HAP-1 (cell line): ENCODE measurements at regions of chr19 and their contacts with region 1.

Region 1: DNA sequence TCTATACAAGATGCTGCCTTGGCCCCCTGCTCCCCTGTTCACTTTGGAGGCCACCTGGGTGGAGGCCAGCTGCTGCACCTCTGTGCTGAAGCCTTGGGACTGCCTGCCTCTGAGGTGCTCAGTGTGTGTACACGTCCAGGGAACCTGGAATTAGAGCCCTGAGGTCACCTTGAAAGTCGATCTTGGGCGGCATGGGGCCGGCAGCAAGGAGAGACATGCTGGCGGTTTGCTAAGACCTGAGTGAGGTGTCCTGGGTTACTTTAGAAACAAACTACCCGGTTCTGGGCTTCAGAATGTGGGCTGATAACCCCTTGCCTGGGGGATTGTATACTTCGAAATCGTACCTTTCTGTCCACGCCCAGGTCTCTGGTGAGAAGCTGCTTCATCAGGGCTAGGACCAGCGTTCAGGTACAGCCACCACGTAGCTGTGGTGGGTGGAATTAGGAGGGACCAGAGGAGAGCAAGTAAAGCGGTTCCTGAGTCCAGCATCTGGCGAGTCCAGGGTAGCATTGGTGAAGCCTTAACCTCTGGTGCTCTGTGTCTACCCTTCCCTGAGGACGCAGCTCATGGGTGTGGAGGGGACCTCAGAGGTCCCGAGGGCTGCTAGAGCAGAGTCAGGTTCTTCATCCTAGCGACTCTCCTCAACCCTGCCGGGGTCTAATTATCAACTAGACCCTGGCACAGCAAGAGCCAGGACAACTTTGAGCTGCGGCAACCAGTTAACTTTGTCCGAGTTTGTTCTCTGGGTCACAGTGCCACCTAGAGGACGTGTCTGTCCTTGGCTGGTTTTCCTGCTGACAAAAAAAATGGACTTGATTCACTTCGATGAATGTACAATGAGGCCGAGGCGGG is 25.3 kb downstream of the TSSK6 start:
- DNase-seq: peak; percentile 80 to 85
- H3K4me3 ChIP-seq: no peak overlapping the region
- H3K4me1 ChIP-seq: peaks cover 14% of the 10 kb centered on the region
- H3K27me3 ChIP-seq: no peaks in the 10 kb centered on the region

Region 2: DNA sequence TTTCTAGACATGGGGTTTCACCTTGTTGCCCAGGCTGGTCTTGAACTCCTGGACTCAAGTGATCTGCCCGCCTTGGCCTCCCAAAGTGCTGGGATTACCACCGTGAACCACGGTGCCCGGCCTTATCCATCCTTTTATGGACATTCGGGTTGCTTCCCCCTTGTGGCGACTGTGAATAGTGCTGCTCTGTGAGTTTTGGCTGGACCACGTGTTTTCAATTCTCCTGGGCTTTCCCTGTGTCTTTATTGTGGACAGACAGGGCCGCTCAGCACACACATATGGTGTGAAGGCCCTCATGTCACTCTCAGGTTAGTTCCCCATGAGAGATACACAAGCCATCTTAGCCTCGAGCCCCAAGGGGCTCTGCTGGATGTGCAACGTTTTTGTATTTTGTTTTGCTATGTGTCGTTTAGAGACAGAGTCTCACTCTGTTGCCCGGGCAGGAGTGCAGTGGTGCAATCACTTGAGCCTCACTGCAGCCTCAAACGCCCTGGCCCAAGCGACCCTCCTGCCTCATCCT is 128.9 kb before region 1 on chr19:
- in situ Hi-C with region 1: loop called (anchors 5 kb)
- DNase-seq: peak; percentile 85 to 93
- H3K4me3 ChIP-seq: no peak overlapping the region
- H3K4me1 ChIP-seq: peaks cover 10% of the 10 kb centered on the region
- H3K27me3 ChIP-seq: no peaks in the 10 kb centered on the region

Region 3: GRCh38 chr19:19579533-19580361 is 89.7 kb after region 1 on chr19:
- in situ Hi-C with region 1: no loop called
- DNase-seq: no peak
- H3K4me3 ChIP-seq: no peak overlapping the region
- H3K4me1 ChIP-seq: no peaks in the 10 kb centered on the region
- H3K27me3 ChIP-seq: no peaks in the 10 kb centered on the region

Region 4: DNA sequence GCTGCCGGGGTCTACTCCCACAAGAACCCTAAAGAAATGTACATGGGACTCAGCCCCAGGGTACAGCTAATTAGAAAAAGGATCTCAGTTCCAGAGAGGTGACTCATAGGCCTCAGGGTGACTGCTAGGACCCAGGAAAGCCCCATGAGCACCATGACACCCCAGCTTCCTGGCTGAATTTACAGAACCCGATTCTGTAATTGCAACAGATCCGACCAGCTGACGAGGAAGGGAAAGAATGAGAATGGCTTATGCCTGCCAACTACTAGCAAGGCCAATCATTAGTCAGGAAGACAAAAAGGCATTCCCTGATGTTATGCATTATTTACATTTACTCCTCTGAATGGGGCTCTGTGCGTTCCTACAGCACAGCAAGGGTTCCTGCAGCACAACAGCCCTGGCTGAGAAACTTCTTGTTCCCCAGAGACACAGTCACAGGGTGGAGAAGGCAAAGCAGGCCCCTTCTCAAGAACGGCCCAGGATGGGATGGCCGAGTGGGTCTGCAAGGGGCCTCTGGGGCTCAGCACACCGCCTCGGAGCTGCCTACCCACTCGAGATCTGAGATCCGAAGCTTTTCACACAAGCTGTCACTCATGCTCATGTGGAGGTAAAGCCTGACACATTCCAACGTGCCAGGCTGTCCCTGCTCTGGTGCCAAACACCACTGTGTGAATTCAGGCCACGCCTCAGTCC is 101.2 kb after region 1 on chr19:
- in situ Hi-C with region 1: no loop called
- DNase-seq: peak in 1 of 2 experiments; percentile 16
- H3K4me3 ChIP-seq: no peak overlapping the region
- H3K4me1 ChIP-seq: peaks cover 5% of the 10 kb centered on the region; the same call in 1 of the 2 replicates
- H3K27me3 ChIP-seq: no peaks in the 10 kb centered on the region